ENCODE measurements at regions of chr2 and their contacts with region 1.

Region 1: DNA sequence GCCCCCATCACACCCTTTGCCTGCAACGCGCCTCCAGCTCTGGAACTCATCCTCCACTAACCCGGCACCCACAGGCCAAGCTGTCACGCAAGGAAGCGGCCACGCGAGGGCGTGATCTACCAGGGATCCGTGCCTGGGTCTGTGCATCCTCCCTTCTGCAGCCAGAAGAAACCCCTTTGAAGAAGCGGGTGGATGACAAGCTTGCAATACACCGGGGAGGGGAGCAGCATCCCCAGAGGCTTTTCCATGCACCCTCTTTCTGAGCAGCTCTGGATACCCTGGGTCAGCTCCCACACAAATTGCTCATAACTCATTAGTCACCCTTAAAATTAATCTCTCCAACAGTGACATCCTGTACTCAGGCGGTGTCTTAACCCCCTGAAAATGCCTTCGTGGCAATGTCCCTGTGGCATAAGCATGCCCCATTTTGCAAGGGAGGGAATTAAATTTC is 47.6 kb downstream of the PDCL3 start:
- DNase-seq: peak; percentile 59 to 66
- ATAC-seq: peak; percentile 61 to 85 (median 74)
- H3K4me3 ChIP-seq: no peak overlapping the region
- H3K27ac ChIP-seq: no peak overlapping the region
- H3K4me1 ChIP-seq: no peaks in the 10 kb centered on the region
- H3K27me3 ChIP-seq: no peaks in the 10 kb centered on the region
- CTCF ChIP-seq: peak; percentile 34 to 74 (median 65)

Region 2: GRCh38 chr2:100721693-100722092 is 111.3 kb after region 1 on chr2:
- intact Hi-C with region 1: loop called in 5 of 10 experiments (anchors 5 to 10 kb)
- DNase-seq: no peak
- ATAC-seq: no peak
- H3K4me3 ChIP-seq: no peak overlapping the region
- H3K27ac ChIP-seq: no peak overlapping the region
- H3K4me1 ChIP-seq: no peaks in the 10 kb centered on the region
- H3K27me3 ChIP-seq: no peaks in the 10 kb centered on the region
- CTCF ChIP-seq: no peak

Region 3: GRCh38 chr2:100902833-100903405 is 292.5 kb after region 1 on chr2:
- intact Hi-C with region 1: loop called in 1 of 10 experiments (anchors 10 kb)
- DNase-seq: no peak
- ATAC-seq: peak in 5 of 8 donors; percentile 35 to 59 (median 35)
- H3K4me3 ChIP-seq: no peak overlapping the region
- H3K27ac ChIP-seq: peak overlapping the region in 2 of 10 donors; percentile 47 to 83
- H3K4me1 ChIP-seq: peaks cover 12 to 53% (median 27%) of the 10 kb centered on the region in 9 donors
- H3K27me3 ChIP-seq: no peaks in the 10 kb centered on the region
- CTCF ChIP-seq: peak in 1 of 9 donors; percentile 4

Measured in heart right ventricle (tissue), 16 donors.